ENCODE measurements at regions of chr5 and their contacts with region 1.

Region 1: DNA sequence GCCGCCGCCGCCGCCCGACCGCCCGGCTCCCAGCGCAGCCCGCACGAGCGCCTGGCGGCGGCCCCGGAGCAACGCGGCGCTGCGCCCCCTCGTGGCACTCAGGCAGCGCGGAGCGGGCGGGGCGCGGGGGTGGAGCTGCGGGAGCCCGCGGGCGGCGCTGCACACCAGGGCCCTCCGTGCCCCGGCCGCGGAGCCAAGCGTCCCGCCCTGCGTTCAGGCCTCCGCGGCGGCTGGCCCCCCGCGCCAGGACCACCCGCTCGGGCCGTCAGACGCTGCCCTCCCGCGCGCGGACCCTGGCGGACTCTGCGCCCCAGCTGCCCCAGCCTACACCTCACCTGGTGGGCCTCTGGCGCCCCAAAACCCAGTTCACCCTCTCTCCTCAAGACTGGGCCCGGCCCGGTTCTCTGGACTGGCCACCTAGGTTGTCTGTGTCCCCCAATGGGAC is at the start of gene RASGEF1C:
- DNase-seq: peak; percentile 30 to 85 (median 51)
- ATAC-seq: peak; percentile 93
- H3K4me3 ChIP-seq: no peak within 1 kb of the TSS
- H3K4me3 Mint-ChIP-seq: peak within 1 kb of the TSS; percentile 71
- H3K27ac ChIP-seq: no peak within 1 kb of the TSS
- H3K27ac Mint-ChIP-seq: no peak within 1 kb of the TSS
- H3K4me1 ChIP-seq: peaks cover 6% of the 10 kb centered on the region
- H3K4me1 Mint-ChIP-seq: peaks cover 12% of the 10 kb centered on the region
- H3K27me3 ChIP-seq: peaks cover 26 to 39% of the 10 kb centered on the region in 2 experiments
- H3K27me3 Mint-ChIP-seq: peaks cover 57% of the 10 kb centered on the region
- CTCF ChIP-seq: no peak
- total RNA-seq, gene RASGEF1C: not detected

Region 2: DNA sequence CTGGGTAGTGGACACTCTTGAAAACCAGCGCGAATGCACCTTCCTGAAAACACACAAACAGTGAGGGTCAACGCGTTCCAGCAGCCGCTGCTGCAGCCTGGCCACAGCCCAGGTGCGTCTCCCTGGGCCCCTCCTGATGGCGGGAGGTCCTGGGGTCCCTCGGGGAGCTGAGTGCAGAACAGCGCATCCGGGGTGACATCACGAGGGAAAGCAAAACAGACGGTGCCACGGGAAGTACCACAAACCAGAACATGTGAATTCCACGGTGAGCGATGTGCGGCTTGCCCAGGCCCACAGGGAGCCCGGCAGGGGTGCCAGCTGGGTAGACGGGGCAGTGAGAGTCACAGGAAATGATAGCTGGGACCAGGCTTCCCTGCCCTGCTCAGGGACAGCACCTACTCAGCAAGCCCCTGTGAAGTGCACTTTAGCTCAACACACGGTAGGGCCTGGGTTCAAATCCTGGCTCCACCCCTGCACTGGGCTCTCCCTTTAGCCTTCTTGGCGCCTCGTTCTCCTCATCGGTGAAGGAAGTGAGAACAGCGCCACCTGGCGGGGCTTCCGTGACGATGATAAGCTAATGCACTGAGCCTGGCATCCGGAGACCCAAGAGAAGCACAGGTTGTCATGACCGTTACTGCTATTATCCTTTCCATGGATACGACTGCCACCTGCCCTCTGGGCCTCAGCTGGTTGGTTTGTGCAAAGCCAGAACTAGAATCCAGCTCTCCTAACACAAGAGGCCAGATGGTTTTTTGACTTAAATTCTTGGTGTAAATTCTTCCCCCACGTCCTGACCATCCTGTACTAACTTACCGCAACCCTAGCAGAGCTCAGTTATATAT is 119.4 kb after region 1 on chr5:
- CTCF ChIA-PET with region 1: interaction called, 5 read pairs
- POLR2A ChIA-PET with region 1: no interaction called
- intact Hi-C with region 1: loop called (anchors 10 kb)
- DNase-seq: peak; percentile 76 to 92 (median 82)
- ATAC-seq: peak; percentile 90
- H3K4me3 ChIP-seq: no peak overlapping the region
- H3K4me3 Mint-ChIP-seq: no peak overlapping the region
- H3K27ac ChIP-seq: no peak overlapping the region
- H3K27ac Mint-ChIP-seq: no peak overlapping the region
- H3K4me1 ChIP-seq: peaks cover 7% of the 10 kb centered on the region
- H3K4me1 Mint-ChIP-seq: no peaks in the 10 kb centered on the region
- H3K27me3 ChIP-seq: peaks cover 0 to 5% of the 10 kb centered on the region in 2 experiments
- H3K27me3 Mint-ChIP-seq: peaks cover 19% of the 10 kb centered on the region
- CTCF ChIP-seq: peak; percentile 90

Measured in CD4-positive, alpha-beta T cell (primary cell).